Posterior vena cava (tissue), 2 donors: ENCODE measurements at regions of chr2 and their contacts with region 1.

Region 1: GRCh38 chr2:54634564-54635511 is 88.6 kb upstream of the EML6 start:
- DNase-seq: no peak

Region 2: GRCh38 chr2:54455563-54456361 is 179.1 kb before region 1 on chr2 and contains the start of gene SPTBN1:
- intact Hi-C with region 1: loop called in 1 of 2 experiments (anchors 10 kb)
- DNase-seq: peak; percentile 96
- total RNA-seq, gene SPTBN1: 329 to 357 TPM

Region 3: GRCh38 chr2:54522624-54523281 is 112.1 kb before region 1 on chr2:
- intact Hi-C with region 1: no loop called
- DNase-seq: no peak

Region 4: GRCh38 chr2:54558188-54559005 is 76.4 kb before region 1 on chr2:
- intact Hi-C with region 1: loop called in 1 of 2 experiments (anchors 10 kb)
- DNase-seq: peak; percentile 89

Region 5: DNA sequence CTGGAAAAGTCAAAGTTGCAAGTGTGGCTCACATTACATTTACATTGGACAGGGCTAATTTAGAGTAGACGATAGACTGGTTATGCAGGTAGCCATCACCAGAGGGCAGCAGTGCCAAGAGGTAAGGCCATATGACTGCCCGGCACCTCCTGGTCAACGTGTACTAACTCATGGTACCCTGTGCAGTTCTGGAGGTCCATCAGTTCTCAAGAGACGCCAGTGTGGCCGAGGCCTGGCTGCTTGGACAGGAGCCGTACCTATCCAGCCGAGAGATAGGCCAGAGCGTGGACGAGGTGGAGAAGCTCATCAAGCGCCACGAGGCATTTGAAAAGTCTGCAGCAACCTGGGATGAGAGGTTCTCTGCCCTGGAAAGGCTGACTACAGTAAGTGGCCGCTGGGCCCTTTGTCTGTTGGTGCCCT is 22.8 kb after region 1 on chr2:
- intact Hi-C with region 1: no loop called
- DNase-seq: no peak